MCF 10A (cell line): ENCODE measurements at regions of chr19 and their contacts with region 1.

Region 1: DNA sequence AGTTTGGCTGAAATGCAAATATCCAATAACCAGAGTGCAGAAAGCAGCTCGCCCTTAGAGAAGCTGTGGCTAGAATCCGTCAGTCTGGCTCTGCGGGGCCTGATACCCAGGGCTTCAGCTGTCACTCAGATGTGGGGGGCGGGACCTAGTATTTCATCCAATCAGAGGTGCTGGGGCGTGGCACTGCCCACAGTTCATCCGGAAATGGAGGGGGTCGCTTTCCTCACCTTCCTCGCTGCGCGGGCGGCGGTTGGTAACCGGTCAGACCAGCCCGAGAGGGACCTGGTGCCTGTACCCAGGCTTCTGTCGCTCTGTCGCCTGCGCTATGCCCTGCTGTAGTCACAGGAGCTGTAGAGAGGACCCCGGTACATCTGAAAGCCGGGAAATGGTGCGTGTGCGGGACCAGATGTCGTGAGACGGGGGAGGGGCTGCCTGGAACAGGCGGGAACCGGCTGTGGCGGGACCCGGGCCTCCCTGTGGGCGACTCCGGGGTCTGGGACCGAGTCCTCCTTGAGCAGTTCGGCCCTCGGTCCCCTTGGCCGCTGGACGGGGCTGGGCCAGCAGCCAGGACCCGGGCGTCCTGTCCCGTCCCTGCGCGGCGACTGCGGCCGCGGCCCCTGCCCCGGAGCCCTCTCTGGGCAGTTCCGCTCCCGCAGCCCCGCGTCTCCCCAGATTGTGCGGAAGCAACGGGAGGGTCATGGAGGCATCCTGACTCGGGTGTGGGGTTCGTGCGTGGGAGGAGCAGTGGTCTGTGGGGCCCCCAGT is at the start of gene ZNF700:
- DNase-seq: peak; percentile 97
- H3K4me3 Mint-ChIP-seq: peak within 1 kb of the TSS; percentile 82
- H3K27ac Mint-ChIP-seq: peak within 1 kb of the TSS; percentile 39
- H3K4me1 Mint-ChIP-seq: peaks cover 16% of the 10 kb centered on the region
- H3K27me3 Mint-ChIP-seq: no peaks in the 10 kb centered on the region
- CTCF ChIP-seq: no peak
- total RNA-seq, gene ZNF700: 5.6 and 5.9 TPM in 2 replicates

Region 2: GRCh38 chr19:11832253-11832912 is 92.7 kb before region 1 on chr19:
- CTCF ChIA-PET with region 1: no interaction called
- POLR2A ChIA-PET with region 1: no interaction called
- intact Hi-C with region 1: no loop called
- DNase-seq: no peak
- H3K4me3 Mint-ChIP-seq: no peak overlapping the region
- H3K27ac Mint-ChIP-seq: no peak overlapping the region
- H3K4me1 Mint-ChIP-seq: no peaks in the 10 kb centered on the region
- H3K27me3 Mint-ChIP-seq: no peaks in the 10 kb centered on the region
- CTCF ChIP-seq: no peak

Region 3: DNA sequence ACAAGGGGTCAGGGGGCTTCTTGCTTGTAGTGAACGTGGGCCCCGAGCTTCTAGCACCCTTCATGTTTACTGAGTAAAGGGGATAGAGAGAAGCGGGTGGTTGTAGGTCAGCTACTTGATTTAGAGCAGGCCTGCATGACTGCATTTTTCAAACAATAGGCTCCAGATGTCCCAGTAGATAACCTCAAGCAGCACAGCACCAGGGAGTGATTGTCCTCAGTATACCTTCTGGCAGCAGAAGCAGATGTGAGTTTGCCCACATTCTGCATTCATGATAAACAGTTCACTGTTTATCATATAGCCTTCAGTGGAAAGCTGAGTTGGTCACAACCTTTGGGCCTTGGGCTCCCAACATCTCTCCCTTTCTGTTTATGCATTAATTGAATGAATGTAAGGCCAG is 71.7 kb before region 1 on chr19:
- CTCF ChIA-PET with region 1: no interaction called
- POLR2A ChIA-PET with region 1: no interaction called
- intact Hi-C with region 1: no loop called
- DNase-seq: no peak
- H3K4me3 Mint-ChIP-seq: no peak overlapping the region
- H3K27ac Mint-ChIP-seq: no peak overlapping the region
- H3K4me1 Mint-ChIP-seq: no peaks in the 10 kb centered on the region
- H3K27me3 Mint-ChIP-seq: no peaks in the 10 kb centered on the region
- CTCF ChIP-seq: no peak

Region 4: DNA sequence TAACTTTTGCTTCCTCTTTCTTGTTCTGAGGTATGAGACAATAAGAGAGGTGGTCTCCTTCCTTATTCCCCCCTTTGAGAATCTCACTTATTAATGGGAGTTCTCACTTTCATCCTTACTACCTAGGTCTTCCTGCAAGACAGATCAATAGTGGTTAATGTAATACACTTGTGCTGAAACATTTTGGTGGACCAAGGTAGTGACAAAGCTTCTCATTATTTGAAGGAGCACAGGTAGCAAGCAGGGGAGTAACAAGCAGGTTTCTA is 17.7 kb after region 1 on chr19:
- CTCF ChIA-PET with region 1: interaction called, 10 read pairs
- POLR2A ChIA-PET with region 1: interaction called, 8 read pairs
- intact Hi-C with region 1: no loop called
- DNase-seq: peak; percentile 12
- H3K4me3 Mint-ChIP-seq: no peak overlapping the region
- H3K27ac Mint-ChIP-seq: no peak overlapping the region
- H3K4me1 Mint-ChIP-seq: no peaks in the 10 kb centered on the region
- H3K27me3 Mint-ChIP-seq: no peaks in the 10 kb centered on the region
- CTCF ChIP-seq: no peak

Region 5: GRCh38 chr19:12015015-12015752 is 90.1 kb after region 1 on chr19:
- CTCF ChIA-PET with region 1: no interaction called
- POLR2A ChIA-PET with region 1: no interaction called
- intact Hi-C with region 1: no loop called
- DNase-seq: no peak
- H3K4me3 Mint-ChIP-seq: no peak overlapping the region
- H3K27ac Mint-ChIP-seq: no peak overlapping the region
- H3K4me1 Mint-ChIP-seq: no peaks in the 10 kb centered on the region
- H3K27me3 Mint-ChIP-seq: no peaks in the 10 kb centered on the region
- CTCF ChIP-seq: no peak

Region 6: DNA sequence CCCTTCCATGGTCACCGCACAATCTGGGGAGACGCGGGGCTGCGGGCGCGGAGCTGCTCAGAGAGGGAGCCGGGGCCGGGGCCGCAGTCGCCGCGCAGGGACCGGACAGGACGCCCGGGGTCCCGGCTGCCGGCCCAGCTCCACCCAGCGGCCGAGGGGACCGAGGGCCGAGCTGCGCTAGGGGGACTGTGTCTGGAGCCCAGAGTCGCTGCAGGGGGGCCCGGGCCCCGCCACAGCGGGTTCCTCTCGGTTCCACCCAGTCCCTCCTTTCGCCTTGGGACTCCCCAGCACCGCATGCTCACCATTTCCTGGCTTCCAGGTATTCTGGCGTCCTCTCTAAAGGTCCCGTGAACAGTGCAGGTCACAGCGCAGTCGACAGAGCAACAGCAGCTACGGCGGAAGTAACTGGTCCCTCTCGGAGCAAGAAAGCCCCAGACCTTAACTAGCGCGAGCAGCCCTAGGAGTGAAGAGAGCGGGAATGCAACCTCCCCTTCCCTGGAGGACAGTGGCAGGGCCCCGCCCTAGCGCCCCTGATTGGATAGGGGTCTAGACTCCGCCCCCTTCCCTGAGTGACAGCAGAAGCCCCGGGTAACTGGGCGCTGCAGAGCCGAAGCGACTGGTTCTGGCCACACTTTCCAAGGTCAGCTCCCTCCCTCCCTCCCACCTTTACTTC is 127.6 kb after region 1 on chr19 and contains the start of gene ZNF878:
- CTCF ChIA-PET with region 1: no interaction called
- POLR2A ChIA-PET with region 1: no interaction called
- intact Hi-C with region 1: no loop called
- DNase-seq: no peak
- H3K4me3 Mint-ChIP-seq: peak within 1 kb of the TSS; percentile 5
- H3K27ac Mint-ChIP-seq: no peak within 1 kb of the TSS
- H3K4me1 Mint-ChIP-seq: no peaks in the 10 kb centered on the region
- H3K27me3 Mint-ChIP-seq: no peaks in the 10 kb centered on the region
- CTCF ChIP-seq: no peak
- total RNA-seq, gene ZNF878: not detected in 2 replicates

Region 7: GRCh38 chr19:12162882-12163806 is 238.1 kb after region 1 on chr19 and contains the start of gene ZNF136:
- CTCF ChIA-PET with region 1: no interaction called
- POLR2A ChIA-PET with region 1: interaction called, 10 read pairs
- intact Hi-C with region 1: no loop called
- DNase-seq: peak; percentile 96
- H3K4me3 Mint-ChIP-seq: peak within 1 kb of the TSS; percentile 83
- H3K27ac Mint-ChIP-seq: peak within 1 kb of the TSS; percentile 97
- H3K4me1 Mint-ChIP-seq: peaks cover 8% of the 10 kb centered on the region
- H3K27me3 Mint-ChIP-seq: no peaks in the 10 kb centered on the region
- CTCF ChIP-seq: no peak
- total RNA-seq, gene ZNF136: 3.7 and 4.3 TPM in 2 replicates